ENCODE measurements at regions of chr17 and their contacts with region 1.

Region 1: DNA sequence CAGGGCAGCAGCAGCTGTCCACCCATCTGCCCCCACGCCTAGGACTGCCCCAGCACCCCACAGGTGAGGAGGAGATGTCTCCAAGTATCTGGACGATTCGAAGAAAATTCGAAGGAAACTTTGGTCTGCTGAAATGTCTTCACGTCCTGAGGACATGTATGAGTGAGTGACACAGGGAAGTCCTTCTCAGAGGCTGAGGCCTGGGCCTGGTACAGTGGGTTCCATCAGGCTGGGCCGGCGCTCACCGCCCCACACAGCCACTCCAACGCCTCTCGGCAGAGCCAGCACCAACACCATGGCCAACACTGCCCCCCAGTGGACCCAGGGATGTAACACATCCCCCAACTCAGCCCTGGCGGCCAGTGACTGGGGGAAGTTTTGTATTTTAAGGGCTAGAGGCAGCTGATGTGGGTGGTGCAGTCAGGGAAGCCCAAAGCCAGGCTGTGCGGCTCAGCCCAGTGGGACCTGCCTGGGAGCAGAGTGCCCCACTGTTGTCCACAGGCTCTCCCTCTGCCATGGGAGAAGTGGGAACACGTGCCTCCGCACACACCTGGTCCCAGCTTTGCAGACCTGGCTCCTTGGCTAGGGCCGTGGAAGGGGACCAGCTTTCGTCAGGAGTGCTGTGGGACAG is 55.8 kb upstream of the FASN start:
- DNase-seq: peak; percentile 30
- H3K4me3 ChIP-seq: no peak overlapping the region
- H3K27ac ChIP-seq: no peak overlapping the region
- H3K27me3 ChIP-seq: no peaks in the 10 kb centered on the region
- CTCF ChIP-seq: peak; percentile 81

Region 2: GRCh38 chr17:82030470-82031302 is 123.2 kb before region 1 on chr17:
- CTCF ChIA-PET with region 1: interaction called, 21 read pairs
- POLR2A ChIA-PET with region 1: no interaction called
- DNase-seq: peak; percentile 51
- H3K4me3 ChIP-seq: peak overlapping the region; percentile 56
- H3K27ac ChIP-seq: peak overlapping the region; percentile 52
- H3K27me3 ChIP-seq: no peaks in the 10 kb centered on the region
- CTCF ChIP-seq: peak; percentile 58